Dendritic cell treated with granulocyte-macrophage colony-stimulating factor and Interleukin-4, amounts not matched to agents 40 ng/mL and 50 ng/mL, for 4 days (primary cell): ENCODE measurements at regions of chr14 and their contacts with region 1.

Region 1: GRCh38 chr14:60677701-60678100 is 28.4 kb upstream of the SIX1 start:
- H3K4me3 Mint-ChIP-seq: no peak overlapping the region
- H3K27ac Mint-ChIP-seq: no peak overlapping the region
- H3K4me1 Mint-ChIP-seq: no peaks in the 10 kb centered on the region
- H3K27me3 Mint-ChIP-seq: peaks cover 20% of the 10 kb centered on the region

Region 2: GRCh38 chr14:60630129-60630528 is 47.6 kb before region 1 on chr14:
- intact Hi-C with region 1: loop called (anchors 1 kb)
- H3K4me3 Mint-ChIP-seq: no peak overlapping the region
- H3K27ac Mint-ChIP-seq: no peak overlapping the region
- H3K4me1 Mint-ChIP-seq: no peaks in the 10 kb centered on the region
- H3K27me3 Mint-ChIP-seq: peaks cover 55% of the 10 kb centered on the region

Region 3: GRCh38 chr14:60721326-60722162 is 43.8 kb after region 1 on chr14:
- intact Hi-C with region 1: no loop called
- H3K4me3 Mint-ChIP-seq: peak overlapping the region; percentile 81
- H3K27ac Mint-ChIP-seq: no peak overlapping the region
- H3K4me1 Mint-ChIP-seq: peaks cover 26% of the 10 kb centered on the region
- H3K27me3 Mint-ChIP-seq: peaks cover 78% of the 10 kb centered on the region